GM10248 (cell line): ENCODE measurements at regions of chr11 and their contacts with region 1.

Region 1: GRCh38 chr11:32323814-32324130 is 111.6 kb downstream of the WT1 start:
- DNase-seq: no peak
- CTCF ChIP-seq: no peak

Region 2: GRCh38 chr11:31640611-31641010 is 683.2 kb before region 1 on chr11:
- CTCF ChIA-PET with region 1: no interaction called
- POLR2A ChIA-PET with region 1: no interaction called
- DNase-seq: no peak
- CTCF ChIP-seq: no peak

Region 3: DNA sequence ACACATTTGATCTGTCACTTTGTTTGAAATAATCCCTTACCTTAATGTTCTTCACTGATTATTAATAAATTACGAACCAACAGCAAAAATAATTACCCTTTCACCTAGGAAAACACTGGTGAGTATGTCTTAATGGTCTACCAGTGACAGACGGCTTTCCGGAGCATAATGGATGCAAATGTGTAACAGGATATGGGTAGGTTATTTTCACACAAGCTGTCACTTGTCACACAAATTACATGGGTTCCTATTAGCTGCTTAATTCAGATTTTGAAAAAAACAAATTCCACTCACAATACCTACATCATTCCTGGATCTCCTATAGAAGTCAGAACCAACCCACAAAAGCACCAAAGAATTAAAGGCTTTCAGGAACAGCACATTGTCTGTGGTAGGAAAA is 16.3 kb before region 1 on chr11:
- CTCF ChIA-PET with region 1: interaction called, 40 read pairs
- POLR2A ChIA-PET with region 1: no interaction called
- DNase-seq: no peak
- CTCF ChIP-seq: no peak

Region 4: DNA sequence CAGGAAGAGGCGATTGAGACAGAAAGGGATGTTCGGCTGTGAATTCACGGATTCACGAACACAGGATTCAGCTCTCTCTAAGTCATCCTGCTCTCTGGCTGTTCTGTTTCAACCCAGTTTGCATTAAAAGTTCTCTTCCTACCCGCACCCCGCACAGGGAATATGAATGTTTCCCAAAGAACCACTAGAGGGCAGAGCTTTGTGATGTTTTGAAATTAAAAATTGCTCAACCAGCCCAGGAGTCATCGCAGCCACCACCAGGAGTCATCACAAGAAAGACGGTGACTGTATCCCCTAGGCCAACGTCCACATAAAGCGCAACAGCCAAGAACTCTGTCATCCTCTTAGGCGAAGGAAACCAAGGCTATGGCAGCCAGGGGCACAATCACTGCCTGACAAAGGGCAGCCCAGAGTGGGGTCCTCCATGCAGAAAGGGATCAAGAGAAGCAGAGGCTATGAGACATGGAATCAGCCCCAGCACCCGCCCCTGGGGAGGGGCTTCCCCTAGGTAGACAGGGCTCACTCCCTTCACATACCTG is 10.8 kb before region 1 on chr11:
- CTCF ChIA-PET with region 1: interaction called, 40 read pairs
- POLR2A ChIA-PET with region 1: no interaction called
- DNase-seq: peak; percentile 38
- CTCF ChIP-seq: peak; percentile 45

Region 5: DNA sequence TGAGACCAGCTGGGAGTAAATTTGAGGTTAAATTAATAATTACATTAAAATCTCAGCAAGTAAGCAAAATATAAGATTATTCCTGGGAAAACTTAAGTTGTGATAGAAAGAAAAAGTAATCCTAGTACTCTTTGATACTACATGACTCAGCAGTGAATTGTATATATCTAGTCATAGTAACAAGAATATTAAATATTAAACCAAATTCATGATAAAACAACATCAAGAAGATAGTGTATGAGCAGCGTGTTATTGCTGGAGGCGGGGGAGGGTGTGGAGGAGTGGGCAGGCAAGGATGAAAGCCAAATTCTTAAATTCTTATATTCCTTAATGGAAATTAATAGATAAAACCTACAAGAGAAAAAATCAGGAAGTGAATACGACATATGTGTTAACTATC is 16.4 kb after region 1 on chr11:
- CTCF ChIA-PET with region 1: interaction called, 23 read pairs
- POLR2A ChIA-PET with region 1: no interaction called
- DNase-seq: no peak
- CTCF ChIP-seq: no peak

Region 6: DNA sequence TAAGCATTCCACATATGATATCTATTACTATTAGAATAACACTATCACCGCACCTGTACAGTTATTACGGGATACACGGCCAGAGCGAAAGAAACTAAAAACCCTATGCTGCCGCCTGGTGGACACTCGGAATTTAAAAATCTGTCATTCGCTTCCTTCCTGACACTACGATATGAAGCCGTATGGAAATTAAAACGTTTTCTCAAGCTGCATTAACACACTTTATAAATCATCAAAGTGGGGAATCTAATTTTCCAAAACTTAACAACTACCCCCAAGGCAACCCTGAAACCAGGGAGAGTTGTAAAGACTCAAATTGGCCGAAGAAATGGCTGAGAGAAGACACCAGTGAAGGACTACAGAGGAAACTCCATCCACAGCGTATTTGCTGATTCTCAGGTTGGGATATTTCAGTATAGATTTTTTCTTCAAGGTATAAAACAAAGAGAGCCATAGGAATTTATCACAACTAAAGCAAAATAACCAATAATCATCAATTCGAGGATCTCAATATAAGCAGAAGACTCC is 469.2 kb after region 1 on chr11:
- CTCF ChIA-PET with region 1: interaction called, 22 read pairs
- POLR2A ChIA-PET with region 1: no interaction called
- DNase-seq: peak; percentile 55
- CTCF ChIP-seq: peak; percentile 54